ENCODE measurements at regions of chr20 and their contacts with region 1.

Region 1: GRCh38 chr20:35454881-35455609 is at the start of gene CEP250:
- DNase-seq: peak; percentile 92 to 97
- ATAC-seq: peak; percentile 97 to 99 (median 98)
- H3K4me3 ChIP-seq: peak within 1 kb of the TSS; percentile 81
- H3K27ac ChIP-seq: peak within 1 kb of the TSS; percentile 92
- H3K4me1 ChIP-seq: peaks cover 17% of the 10 kb centered on the region
- H3K27me3 ChIP-seq: no peaks in the 10 kb centered on the region
- CTCF ChIP-seq: no peak
- total RNA-seq, gene CEP250: 17.0 to 19.3 (median 17.6) TPM

Region 2: DNA sequence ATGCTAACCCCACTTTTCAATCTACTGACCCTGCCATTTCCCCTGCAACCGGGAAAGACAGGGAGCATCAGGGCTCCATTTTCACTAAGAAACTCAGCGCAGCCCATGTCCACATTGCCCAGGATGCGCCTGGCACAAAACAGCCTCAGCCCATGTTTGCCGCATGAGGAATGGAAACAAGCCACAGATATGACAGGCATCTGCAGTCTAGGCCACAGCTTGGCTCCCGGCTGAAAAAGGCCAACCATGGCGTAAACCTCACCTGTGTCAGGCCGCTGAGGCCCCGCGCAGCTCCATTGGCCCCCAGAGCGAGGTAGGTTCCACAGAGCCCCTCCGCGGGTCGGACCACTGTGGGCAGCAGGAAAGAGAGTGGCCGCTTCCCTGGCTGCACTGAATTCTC is 604.1 kb before region 1 on chr20:
- intact Hi-C with region 1: no loop called
- DNase-seq: no peak
- ATAC-seq: peak in 2 of 4 donors; percentile 36 to 40
- H3K4me3 ChIP-seq: no peak overlapping the region
- H3K27ac ChIP-seq: no peak overlapping the region
- H3K4me1 ChIP-seq: no peaks in the 10 kb centered on the region
- H3K27me3 ChIP-seq: no peaks in the 10 kb centered on the region
- CTCF ChIP-seq: no peak

Region 3: GRCh38 chr20:35171753-35172433 is 283.2 kb before region 1 on chr20 and contains the start of gene PROCR:
- intact Hi-C with region 1: no loop called
- DNase-seq: peak; percentile 88
- ATAC-seq: peak; percentile 44 to 81 (median 80)
- H3K4me3 ChIP-seq: peak within 1 kb of the TSS; percentile 55
- H3K27ac ChIP-seq: peak within 1 kb of the TSS; percentile 16
- H3K4me1 ChIP-seq: no peaks in the 10 kb centered on the region
- H3K27me3 ChIP-seq: peaks cover 0 to 2% (median 0%) of the 10 kb centered on the region in 3 donors
- CTCF ChIP-seq: no peak
- total RNA-seq, gene PROCR: 2.8 to 8.8 (median 6.4) TPM

Region 4: DNA sequence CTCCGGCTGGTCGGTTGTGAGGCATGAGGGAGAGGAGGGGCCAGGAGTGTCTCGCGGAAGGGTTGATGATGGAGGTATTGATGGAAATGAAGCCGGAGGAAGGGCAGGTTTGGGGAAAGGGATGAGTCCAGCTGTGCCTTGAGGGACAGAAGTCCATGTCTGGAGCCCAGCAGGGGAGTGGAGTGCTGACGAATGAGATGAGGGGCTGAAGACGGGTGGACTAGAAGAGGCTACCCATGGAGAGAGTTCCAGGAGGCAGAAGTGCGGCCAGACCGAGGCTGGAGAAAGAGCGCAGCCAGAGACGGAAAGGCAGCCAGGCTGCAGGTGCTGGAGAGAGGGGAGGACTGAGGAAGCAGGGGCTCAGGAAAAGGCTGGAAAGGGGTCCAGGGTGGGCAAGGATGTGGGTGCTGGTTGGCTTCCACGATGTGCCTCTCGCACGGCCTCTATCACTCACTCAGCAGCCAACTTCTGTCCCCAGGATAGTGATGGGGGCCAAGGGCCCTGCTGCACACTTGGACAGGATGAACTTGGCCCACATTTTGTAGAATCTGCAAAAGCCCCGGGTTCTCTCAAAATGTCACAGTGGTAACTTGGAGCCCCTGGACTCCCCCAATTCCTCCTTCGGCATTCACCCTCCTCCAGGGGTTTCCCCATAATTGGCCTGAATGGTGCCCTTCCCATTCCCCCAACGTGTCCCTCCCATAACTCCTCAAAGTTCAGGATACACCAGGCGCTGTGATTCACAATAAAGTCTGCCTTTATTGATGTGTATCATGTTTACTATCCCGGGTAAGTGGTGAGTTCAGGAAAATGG is 169.8 kb before region 1 on chr20:
- intact Hi-C with region 1: loop called in 1 of 2 experiments (anchors 5 kb)
- DNase-seq: no peak
- ATAC-seq: peak; percentile 3 to 7 (median 4)
- H3K4me3 ChIP-seq: peak overlapping the region; percentile 82
- H3K27ac ChIP-seq: peak overlapping the region; percentile 82
- H3K4me1 ChIP-seq: peaks cover 11% of the 10 kb centered on the region
- H3K27me3 ChIP-seq: no peaks in the 10 kb centered on the region
- CTCF ChIP-seq: no peak

Region 5: DNA sequence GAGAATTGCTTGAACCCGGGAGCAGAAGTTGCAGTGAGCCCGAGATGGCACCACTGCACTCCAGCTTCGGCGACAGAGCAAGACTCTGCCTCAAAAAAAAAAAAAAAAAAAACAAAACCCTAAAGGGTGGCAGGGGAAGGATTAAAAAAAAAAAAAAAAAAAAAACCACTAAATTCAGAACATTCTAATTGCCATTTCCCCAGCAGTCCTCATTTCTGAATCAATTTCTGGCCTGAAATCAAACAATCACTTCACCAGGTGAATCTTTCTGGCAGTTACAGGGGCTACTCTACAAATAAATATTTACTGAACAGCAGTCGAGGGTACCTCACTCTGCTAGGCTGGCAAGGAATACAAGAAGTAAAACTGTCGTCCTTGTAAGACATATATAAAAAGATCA is 44.4 kb before region 1 on chr20:
- intact Hi-C with region 1: loop called in 1 of 2 experiments (anchors 5 kb)
- DNase-seq: no peak
- ATAC-seq: no peak
- H3K4me3 ChIP-seq: peak overlapping the region; percentile 95
- H3K27ac ChIP-seq: peak overlapping the region; percentile 84
- H3K4me1 ChIP-seq: peaks cover 3% of the 10 kb centered on the region
- H3K27me3 ChIP-seq: no peaks in the 10 kb centered on the region
- CTCF ChIP-seq: no peak

Region 6: DNA sequence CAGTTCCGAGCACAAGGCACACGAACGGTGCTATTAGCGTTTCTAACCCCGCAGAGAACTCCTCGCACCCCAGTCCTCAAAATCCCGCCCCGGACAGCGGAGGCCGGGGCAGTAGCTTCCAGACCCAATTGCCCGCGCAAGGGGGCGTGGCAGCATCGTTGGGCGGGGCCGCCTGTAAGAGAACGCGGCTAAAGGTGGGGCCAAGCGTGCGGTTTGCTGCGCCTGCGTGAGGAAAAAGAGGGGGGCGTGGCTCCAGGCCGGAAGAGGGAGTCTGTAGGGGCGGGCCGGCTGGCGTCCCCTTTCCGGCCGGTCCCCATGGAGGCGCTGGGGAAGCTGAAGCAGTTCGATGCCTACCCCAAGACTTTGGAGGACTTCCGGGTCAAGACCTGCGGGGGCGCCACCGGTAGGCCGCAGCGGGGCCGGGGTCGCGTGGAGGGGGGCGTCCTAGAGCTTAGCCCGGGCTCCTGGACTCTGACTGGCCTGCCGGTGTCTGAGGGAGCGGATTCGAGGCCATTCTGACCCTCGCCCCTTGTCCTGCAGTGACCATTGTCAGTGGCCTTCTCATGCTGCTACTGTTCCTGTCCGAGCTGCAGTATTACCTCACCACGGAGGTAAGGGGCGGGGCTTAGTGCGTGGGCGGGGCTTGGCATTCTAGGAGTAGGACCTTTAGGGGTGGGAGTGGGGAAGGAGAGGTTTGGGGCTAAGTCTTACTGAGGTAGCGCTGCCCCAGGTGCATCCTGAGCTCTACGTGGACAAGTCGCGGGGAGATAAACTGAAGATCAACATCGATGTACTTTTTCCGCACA is 86.9 kb after region 1 on chr20 and contains the start of gene ERGIC3:
- intact Hi-C with region 1: no loop called
- DNase-seq: peak; percentile 98 to 99
- ATAC-seq: peak; percentile 99 to 100 (median 100)
- H3K4me3 ChIP-seq: peak within 1 kb of the TSS; percentile 96
- H3K27ac ChIP-seq: peak within 1 kb of the TSS; percentile 85
- H3K4me1 ChIP-seq: peaks cover 10% of the 10 kb centered on the region
- H3K27me3 ChIP-seq: no peaks in the 10 kb centered on the region
- CTCF ChIP-seq: no peak
- total RNA-seq, gene ERGIC3: 61.7 to 71.6 (median 64.6) TPM